Esophagus muscularis mucosa (tissue), 4 donors: ENCODE measurements at regions of chrX and their contacts with region 1.

Region 1: DNA sequence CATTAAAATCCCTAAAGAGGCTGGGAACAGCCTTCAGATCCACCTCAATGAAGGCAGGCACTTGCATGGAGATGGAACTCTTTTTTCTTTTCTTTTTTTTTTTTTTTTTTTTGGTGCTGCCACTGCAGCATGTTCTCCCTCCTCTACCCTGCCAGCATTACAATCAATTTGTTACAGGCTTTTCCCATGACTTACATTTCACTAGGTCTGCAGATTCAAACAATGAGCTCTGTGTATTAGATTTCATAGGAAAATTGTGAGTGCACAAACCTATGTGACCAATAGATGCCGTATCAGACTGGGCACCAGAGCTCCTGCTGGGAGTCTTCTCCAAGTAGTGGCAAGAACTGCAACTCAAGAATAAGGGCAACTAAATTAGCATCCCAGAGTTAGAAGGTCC is 63.8 kb upstream of the GABRQ start:
- DNase-seq: no peak
- H3K4me3 ChIP-seq: no peak overlapping the region
- H3K27ac ChIP-seq: no peak overlapping the region
- H3K4me1 ChIP-seq: no peaks in the 10 kb centered on the region
- H3K27me3 ChIP-seq: no peaks in the 10 kb centered on the region
- CTCF ChIP-seq: no peak
- EP300 ChIP-seq: no peak
- POLR2A ChIP-seq: no peak

Region 2: GRCh38 chrX:152619897-152620296 is 46.0 kb after region 1 on chrX:
- intact Hi-C with region 1: loop called (anchors 10 kb)
- DNase-seq: no peak
- H3K4me3 ChIP-seq: no peak overlapping the region
- H3K27ac ChIP-seq: no peak overlapping the region
- H3K4me1 ChIP-seq: no peaks in the 10 kb centered on the region
- H3K27me3 ChIP-seq: peaks cover 0 to 12% (median 0%) of the 10 kb centered on the region in 4 donors
- CTCF ChIP-seq: no peak
- EP300 ChIP-seq: no peak
- POLR2A ChIP-seq: no peak